GM12878 (cell line): ENCODE measurements at regions of chr16 and their contacts with region 1.

Region 1: DNA sequence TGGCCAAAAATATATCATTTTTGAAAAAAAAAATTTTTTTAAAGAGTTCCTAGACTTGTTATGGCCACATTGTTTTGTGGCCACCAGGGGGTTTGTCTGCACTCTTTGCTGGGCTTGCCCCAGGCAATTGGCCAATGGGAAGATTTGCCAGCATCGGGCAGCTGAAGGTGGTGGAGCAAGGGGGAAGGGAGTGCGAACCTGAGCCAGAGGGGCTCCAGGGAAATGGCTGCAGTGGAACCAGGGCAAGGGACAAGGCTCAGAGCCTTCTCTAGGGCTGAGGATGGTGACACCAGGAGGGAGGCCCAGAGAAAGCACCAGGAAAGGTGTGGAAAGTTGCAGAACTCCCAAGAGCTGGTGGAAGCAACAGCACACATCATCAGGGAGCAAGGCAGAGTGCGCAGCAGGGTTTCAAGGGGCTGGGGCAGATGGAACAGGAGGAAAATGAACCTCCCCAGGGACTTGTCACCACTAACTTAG is 15.5 kb upstream of the CMIP start:
- DNase-seq: no peak
- ATAC-seq: peak; percentile 59
- H3K4me3 ChIP-seq: no peak overlapping the region
- H3K27ac ChIP-seq: no peak overlapping the region
- H3K4me1 ChIP-seq: peaks cover 27% of the 10 kb centered on the region
- H3K27me3 ChIP-seq: no peaks in the 10 kb centered on the region
- CTCF ChIP-seq: peak; percentile 35 to 47 (median 43); a peak in 5 of 6 replicates
- EP300 ChIP-seq: no peak
- POLR2A ChIP-seq: no peak
- RAD21 ChIP-seq: peak; percentile 61

Region 2: DNA sequence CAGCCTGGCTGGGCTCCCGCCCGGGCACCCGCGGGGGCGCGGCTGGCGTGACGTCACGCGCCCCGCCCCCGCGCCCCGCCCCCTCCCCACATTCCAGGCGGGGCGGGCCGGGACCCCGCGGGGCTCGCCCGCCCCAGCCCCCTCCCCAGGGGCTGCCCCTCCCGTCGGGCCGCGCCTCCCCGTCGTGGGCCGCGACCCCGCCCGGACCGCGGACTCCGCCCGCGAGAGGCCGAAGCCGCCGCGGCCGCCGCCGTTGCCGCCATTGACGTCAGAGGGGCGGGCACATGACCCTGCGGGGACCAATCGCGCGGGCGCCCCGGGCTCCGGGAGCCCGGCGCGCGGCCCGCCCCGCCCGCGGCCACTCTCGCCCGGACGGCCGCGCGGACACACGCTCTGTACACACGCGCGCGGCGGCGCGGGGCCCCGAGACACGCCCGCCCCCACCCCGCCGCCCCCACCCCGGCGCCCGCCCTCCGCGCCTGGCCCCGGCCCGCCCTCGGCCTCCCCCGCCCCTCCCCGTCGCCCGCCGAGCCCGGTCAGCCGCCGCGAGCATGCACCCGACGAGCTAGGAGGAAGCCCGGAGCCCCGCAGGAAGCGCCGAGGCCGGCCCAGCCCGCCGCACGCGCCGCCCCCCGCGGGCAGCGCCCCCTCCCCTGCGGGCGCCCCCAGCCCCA is 15.5 kb after region 1 on chr16 and contains the start of gene CMIP:
- CTCF ChIA-PET with region 1: interaction called, 10 read pairs
- POLR2A ChIA-PET with region 1: interaction called, 3 read pairs
- RAD21 ChIA-PET with region 1: interaction called, 13 read pairs
- SMC1A ChIA-PET with region 1: interaction called, 10 read pairs
- in situ Hi-C with region 1: no loop called
- intact Hi-C with region 1: no loop called
- DNase-seq: no peak
- ATAC-seq: peak; percentile 59
- H3K4me3 ChIP-seq: peak within 1 kb of the TSS; percentile 100
- H3K27ac ChIP-seq: peak within 1 kb of the TSS; percentile 87
- H3K4me1 ChIP-seq: peaks cover 13% of the 10 kb centered on the region
- H3K27me3 ChIP-seq: peaks cover 0 to 2% of the 10 kb centered on the region in 2 experiments; a peak in 1 of 4 replicates
- CTCF ChIP-seq: no peak
- EP300 ChIP-seq: no peak
- POLR2A ChIP-seq: no peak
- RAD21 ChIP-seq: no peak
- polyA plus RNA-seq, gene CMIP: 1.4 to 1.7 TPM

Region 3: GRCh38 chr16:81879625-81880024 is 450.5 kb after region 1 on chr16:
- CTCF ChIA-PET with region 1: no interaction called
- POLR2A ChIA-PET with region 1: no interaction called
- RAD21 ChIA-PET with region 1: no interaction called
- SMC1A ChIA-PET with region 1: no interaction called
- in situ Hi-C with region 1: no loop called
- intact Hi-C with region 1: no loop called
- DNase-seq: no peak
- ATAC-seq: peak; percentile 45; the same call in 1 of the 3 replicates
- H3K4me3 ChIP-seq: no peak overlapping the region
- H3K27ac ChIP-seq: no peak overlapping the region
- H3K4me1 ChIP-seq: no peaks in the 10 kb centered on the region
- H3K27me3 ChIP-seq: no peaks in the 10 kb centered on the region
- CTCF ChIP-seq: peak; percentile 3 to 31 (median 30); a peak in 2 of 6 replicates
- EP300 ChIP-seq: no peak
- POLR2A ChIP-seq: no peak
- RAD21 ChIP-seq: no peak